Activated CD4-positive, alpha-beta T cell treated with anti-CD3 and anti-CD28 coated beads, Interleukin-2, amount 10 ng/mL, durations not matched to agents 24 days and 14 days (primary cell): ENCODE measurements at regions of chrX and their contacts with region 1.

Region 1: GRCh38 chrX:79366873-79367749 is at the start of gene ITM2A:
- DNase-seq: peak; percentile 86
- H3K4me3 Mint-ChIP-seq: peak within 1 kb of the TSS; percentile 99
- H3K27ac Mint-ChIP-seq: peak within 1 kb of the TSS; percentile 99
- H3K4me1 Mint-ChIP-seq: peaks cover 30% of the 10 kb centered on the region
- H3K27me3 Mint-ChIP-seq: no peaks in the 10 kb centered on the region
- total RNA-seq, gene ITM2A: 102 and 113 TPM in 2 replicates

Region 2: DNA sequence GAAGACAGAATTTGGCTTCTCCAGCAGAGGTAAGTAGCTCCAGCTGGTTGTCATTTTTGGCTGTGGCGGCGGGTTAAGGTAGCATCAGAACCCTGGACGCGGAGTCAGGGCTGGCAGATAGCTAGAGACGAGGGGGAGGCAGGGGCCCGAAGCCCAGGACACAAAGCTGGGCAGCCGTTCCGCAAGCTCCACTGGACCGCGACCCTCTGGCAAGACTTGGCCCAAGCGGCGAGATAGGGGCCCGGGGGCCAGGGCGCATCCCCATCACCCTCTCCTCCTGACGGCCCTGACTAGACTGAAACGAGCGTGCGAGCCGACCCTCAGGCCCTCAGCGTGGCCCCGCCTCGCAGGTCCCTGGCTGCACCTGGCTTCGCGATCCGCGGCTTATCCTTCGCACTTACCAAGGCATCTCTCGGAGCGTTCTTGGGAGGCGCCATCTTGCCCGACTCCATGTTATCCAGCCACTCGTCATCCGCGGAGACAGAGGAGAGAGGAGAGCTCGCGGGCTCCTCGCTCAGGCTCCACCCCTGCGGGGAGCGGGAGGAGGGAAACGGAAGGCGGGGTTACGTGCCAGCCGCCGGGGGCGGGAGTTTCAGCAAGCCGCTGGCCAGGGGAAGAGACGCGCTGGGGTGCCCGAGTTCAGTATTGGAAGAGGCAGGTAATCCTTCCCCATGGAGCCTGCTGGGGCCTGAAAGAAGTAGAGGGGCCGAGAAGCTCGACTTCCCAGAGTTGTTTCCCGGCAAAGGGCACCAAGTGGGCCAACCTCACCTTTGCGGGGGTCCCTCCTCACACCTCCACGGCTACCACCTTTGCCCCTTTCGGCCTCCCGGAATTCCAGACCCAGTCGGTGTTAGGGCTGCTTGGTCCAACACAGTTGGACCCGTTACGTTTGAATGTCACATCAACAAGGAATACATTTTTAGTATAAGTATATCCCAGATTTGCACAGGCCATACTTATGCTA is 1227.7 kb before region 1 on chrX and contains the start of gene TAF9B:
- intact Hi-C with region 1: loop called (anchors 2 kb)
- DNase-seq: peak; percentile 95
- H3K4me3 Mint-ChIP-seq: peak within 1 kb of the TSS; percentile 92
- H3K27ac Mint-ChIP-seq: peak within 1 kb of the TSS; percentile 95
- H3K4me1 Mint-ChIP-seq: peaks cover 6% of the 10 kb centered on the region
- H3K27me3 Mint-ChIP-seq: no peaks in the 10 kb centered on the region
- total RNA-seq, gene TAF9B: 14.6 and 16.1 TPM in 2 replicates

Region 3: DNA sequence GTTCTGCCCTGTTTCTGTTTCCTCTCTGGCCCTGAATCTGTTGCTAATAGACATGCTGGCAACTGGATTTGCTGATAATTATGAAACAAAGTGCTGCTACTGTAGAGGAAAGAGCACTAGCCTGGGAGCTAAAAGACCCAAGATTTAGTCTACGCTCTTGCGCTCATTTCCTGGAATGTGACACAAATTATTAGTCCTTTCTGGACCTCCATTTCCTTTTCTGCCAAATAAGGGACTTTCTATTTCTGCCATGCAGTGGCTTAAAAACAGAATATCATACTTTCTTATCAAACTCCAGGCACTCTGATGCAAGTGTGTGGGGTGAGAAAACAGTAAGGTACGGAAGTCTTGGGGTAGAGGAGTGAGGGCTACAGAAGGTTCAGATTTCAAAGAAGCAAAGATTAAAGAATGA is 271.0 kb before region 1 on chrX:
- intact Hi-C with region 1: loop called (anchors 5 kb)
- DNase-seq: no peak
- H3K4me3 Mint-ChIP-seq: peak overlapping the region; percentile 76
- H3K27ac Mint-ChIP-seq: peak overlapping the region; percentile 92
- H3K4me1 Mint-ChIP-seq: peaks cover 39% of the 10 kb centered on the region
- H3K27me3 Mint-ChIP-seq: no peaks in the 10 kb centered on the region

Region 4: GRCh38 chrX:79270401-79270800 is 96.7 kb before region 1 on chrX:
- intact Hi-C with region 1: loop called (anchors 2 kb)
- DNase-seq: peak; percentile 88
- H3K4me3 Mint-ChIP-seq: peak overlapping the region; percentile 23
- H3K27ac Mint-ChIP-seq: peak overlapping the region; percentile 20
- H3K4me1 Mint-ChIP-seq: peaks cover 26% of the 10 kb centered on the region
- H3K27me3 Mint-ChIP-seq: no peaks in the 10 kb centered on the region

Region 5: GRCh38 chrX:79440336-79440735 is 73.2 kb after region 1 on chrX:
- intact Hi-C with region 1: no loop called
- DNase-seq: no peak
- H3K4me3 Mint-ChIP-seq: no peak overlapping the region
- H3K27ac Mint-ChIP-seq: no peak overlapping the region
- H3K4me1 Mint-ChIP-seq: no peaks in the 10 kb centered on the region
- H3K27me3 Mint-ChIP-seq: no peaks in the 10 kb centered on the region

Region 6: GRCh38 chrX:81201671-81202455 is 1834.8 kb after region 1 on chrX and contains the starts of genes HMGN5 and SH3BGRL:
- intact Hi-C with region 1: loop called (anchors 5 kb)
- DNase-seq: peak; percentile 89
- H3K4me3 Mint-ChIP-seq: peak within 1 kb of the TSS; percentile 91
- H3K27ac Mint-ChIP-seq: peak within 1 kb of the TSS; percentile 95
- H3K4me1 Mint-ChIP-seq: peaks cover 29% of the 10 kb centered on the region
- H3K27me3 Mint-ChIP-seq: no peaks in the 10 kb centered on the region
- total RNA-seq, gene HMGN5: 0.88 and 1.5 TPM in 2 replicates
- total RNA-seq, gene SH3BGRL: 35.7 and 35.9 TPM in 2 replicates